Gastrocnemius medialis (tissue), 4 donors: ENCODE measurements at regions of chr4 and their contacts with region 1.

Region 1: GRCh38 chr4:129093191-129093920 is at the start of gene SCLT1:
- DNase-seq: peak; percentile 98 to 99
- ATAC-seq: peak; percentile 99
- H3K4me3 ChIP-seq: peak within 1 kb of the TSS; percentile 78 to 89 (median 84)
- H3K27ac ChIP-seq: peak within 1 kb of the TSS; percentile 90 to 94 (median 94)
- H3K4me1 ChIP-seq: peaks cover 18 to 19% of the 10 kb centered on the region in 2 donors
- H3K27me3 ChIP-seq: no peaks in the 10 kb centered on the region
- CTCF ChIP-seq: peak in 1 of 5 experiments; percentile 13
- POLR2A ChIP-seq: peak; percentile 65 to 87
- total RNA-seq, gene SCLT1: 1.0 to 4.1 (median 1.8) TPM

Region 2: DNA sequence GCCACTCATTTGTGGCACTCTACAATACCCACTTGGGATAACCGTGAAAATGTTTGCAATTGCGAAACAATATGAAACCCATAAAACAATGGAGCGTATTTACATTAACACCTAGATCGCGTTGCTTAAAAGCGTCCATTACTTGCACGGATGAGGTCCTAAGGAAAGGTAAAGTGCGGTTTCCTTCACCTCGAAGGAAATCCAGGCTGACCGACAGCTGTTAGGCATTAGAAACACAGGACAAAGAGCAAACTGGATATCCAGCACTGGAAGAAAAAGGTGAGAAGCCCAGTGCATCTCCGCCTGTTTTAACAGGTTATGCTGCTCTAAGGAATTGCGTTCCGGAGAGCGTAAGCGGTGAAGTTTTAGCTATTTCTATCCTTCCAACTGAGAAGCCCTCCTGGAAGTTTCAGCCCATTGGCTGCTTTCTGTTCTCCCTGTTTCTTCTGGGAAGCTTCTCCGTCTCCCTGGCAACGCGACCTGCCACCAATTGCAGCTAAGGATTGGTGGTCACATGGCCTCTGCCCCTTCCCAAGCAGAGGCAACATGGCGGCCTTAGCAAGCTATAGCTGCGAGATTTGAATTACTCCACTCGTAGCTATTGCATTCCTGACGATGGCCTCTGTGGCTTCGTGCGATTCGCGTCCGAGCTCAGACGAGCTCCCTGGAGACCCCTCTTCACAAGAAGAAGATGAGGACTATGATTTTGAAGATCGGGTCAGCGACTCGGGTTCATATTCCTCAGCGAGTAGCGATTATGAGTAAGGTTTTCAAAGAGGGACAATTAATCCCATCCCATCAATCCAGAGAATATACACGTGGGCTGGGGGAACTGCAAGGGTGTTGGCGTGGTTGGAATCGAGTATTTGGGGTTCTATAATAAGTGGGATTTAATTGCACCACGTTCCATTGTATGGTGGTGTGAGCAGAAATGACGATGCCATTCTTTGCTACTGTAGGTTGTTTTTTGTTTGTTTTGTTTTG is 1460.6 kb before region 1 on chr4 and contains the start of gene INTU:
- in situ Hi-C with region 1: no loop called
- intact Hi-C with region 1: loop called (anchors 10 kb)
- DNase-seq: peak; percentile 89 to 91
- ATAC-seq: peak; percentile 100
- H3K4me3 ChIP-seq: peak within 1 kb of the TSS; percentile 62 to 94 (median 76)
- H3K27ac ChIP-seq: peak within 1 kb of the TSS in 2 of 4 donors; percentile 34 to 58
- H3K4me1 ChIP-seq: peaks cover 12 to 18% of the 10 kb centered on the region in 2 donors
- H3K27me3 ChIP-seq: no peaks in the 10 kb centered on the region
- CTCF ChIP-seq: no peak
- POLR2A ChIP-seq: no peak
- total RNA-seq, gene INTU: 0.65 to 2.6 (median 1.7) TPM

Region 3: GRCh38 chr4:128060699-128061565 is 1032.4 kb before region 1 on chr4 and contains the start of gene LARP1B:
- in situ Hi-C with region 1: no loop called
- intact Hi-C with region 1: loop called (anchors 2 kb)
- DNase-seq: peak; percentile 94
- ATAC-seq: peak; percentile 88 to 91
- H3K4me3 ChIP-seq: peak within 1 kb of the TSS; percentile 55 to 95 (median 65)
- H3K27ac ChIP-seq: peak within 1 kb of the TSS; percentile 92 to 99 (median 94)
- H3K4me1 ChIP-seq: peaks cover 10 to 12% of the 10 kb centered on the region in 2 donors
- H3K27me3 ChIP-seq: no peaks in the 10 kb centered on the region
- CTCF ChIP-seq: peak in 1 of 5 experiments; percentile 9
- POLR2A ChIP-seq: peak; percentile 92 to 94
- total RNA-seq, gene LARP1B: 19.5 to 23.5 (median 22.8) TPM

Region 4: DNA sequence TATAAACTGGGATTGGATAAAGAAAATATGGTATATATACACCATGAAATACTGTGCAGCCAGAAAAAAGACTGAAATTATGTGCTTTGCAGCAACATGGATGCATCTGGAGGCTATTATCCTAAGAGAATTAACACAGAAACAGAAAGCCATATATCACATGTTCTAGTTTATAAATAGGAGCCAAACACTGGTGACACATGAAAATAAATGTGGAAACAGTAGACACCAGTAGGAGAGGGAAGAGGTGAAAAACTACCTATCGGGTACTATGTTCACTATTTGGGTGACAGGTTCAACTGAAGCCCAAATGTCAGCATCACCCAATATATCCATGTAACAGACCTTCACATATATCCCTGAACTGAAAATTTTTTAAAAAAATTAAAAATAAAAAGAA is 727.7 kb after region 1 on chr4:
- in situ Hi-C with region 1: no loop called
- intact Hi-C with region 1: no loop called
- DNase-seq: no peak
- ATAC-seq: peak; percentile 41 to 65
- H3K4me3 ChIP-seq: no peak overlapping the region
- H3K27ac ChIP-seq: peak overlapping the region in 2 of 4 donors; percentile 12 to 29
- H3K4me1 ChIP-seq: peaks cover 8 to 13% of the 10 kb centered on the region in 2 donors
- H3K27me3 ChIP-seq: no peaks in the 10 kb centered on the region
- CTCF ChIP-seq: no peak
- POLR2A ChIP-seq: no peak